Activated CD4-positive, alpha-beta T cell treated with anti-CD3 and anti-CD28 coated beads, Interleukin-2, amount 10 ng/mL, durations not matched to agents 24 days and 14 days (primary cell): ENCODE measurements at regions of chr12 and their contacts with region 1.

Region 1: DNA sequence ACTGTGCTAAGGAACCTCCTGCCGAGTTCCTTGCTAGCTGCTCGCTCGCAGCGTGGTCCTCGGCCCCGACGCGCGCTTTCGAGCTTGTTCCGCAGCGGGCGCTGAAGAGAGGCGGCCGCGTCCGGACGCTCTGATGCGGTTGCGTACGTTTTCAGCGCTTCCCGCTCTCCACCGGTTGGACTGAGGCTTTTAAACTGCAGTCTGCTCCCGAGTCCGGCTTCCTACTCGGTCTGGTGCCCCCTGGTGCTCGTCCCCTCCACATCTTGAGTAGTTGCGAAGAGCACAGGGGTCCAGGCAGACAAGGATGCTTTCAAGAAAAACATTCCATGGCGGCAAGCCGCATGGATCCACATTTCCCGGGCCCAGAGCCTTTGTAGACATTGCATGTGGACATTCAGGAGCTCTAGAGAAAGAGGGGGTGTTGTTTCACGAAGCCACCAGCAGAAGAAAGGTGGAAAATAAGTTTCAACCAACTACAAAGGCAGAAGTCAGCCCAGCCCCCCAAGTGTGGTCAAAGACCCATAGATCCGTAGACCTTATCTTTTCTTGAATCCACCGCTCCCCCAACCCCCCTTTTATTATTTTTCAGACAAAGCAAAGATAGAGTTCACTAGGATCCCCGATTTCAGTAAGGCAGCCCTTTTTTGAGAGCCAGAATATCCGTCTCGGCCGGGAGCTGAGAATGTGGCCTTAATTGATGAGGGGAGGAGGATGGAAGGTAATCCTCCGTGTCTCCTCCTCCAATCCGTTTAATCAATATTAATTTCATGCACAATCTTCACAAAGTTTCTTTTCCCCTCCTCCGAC is 984 bp upstream of the WNK1 start:
- DNase-seq: peak; percentile 96
- H3K4me3 Mint-ChIP-seq: no peak overlapping the region
- H3K27ac Mint-ChIP-seq: no peak overlapping the region
- H3K4me1 Mint-ChIP-seq: peaks cover 21% of the 10 kb centered on the region
- H3K27me3 Mint-ChIP-seq: no peaks in the 10 kb centered on the region

Region 2: GRCh38 chr12:169528-170370 is 581.6 kb before region 1 on chr12:
- intact Hi-C with region 1: no loop called
- DNase-seq: no peak
- H3K4me3 Mint-ChIP-seq: no peak overlapping the region
- H3K27ac Mint-ChIP-seq: no peak overlapping the region
- H3K4me1 Mint-ChIP-seq: peaks cover 15% of the 10 kb centered on the region
- H3K27me3 Mint-ChIP-seq: peaks cover 5% of the 10 kb centered on the region

Region 3: DNA sequence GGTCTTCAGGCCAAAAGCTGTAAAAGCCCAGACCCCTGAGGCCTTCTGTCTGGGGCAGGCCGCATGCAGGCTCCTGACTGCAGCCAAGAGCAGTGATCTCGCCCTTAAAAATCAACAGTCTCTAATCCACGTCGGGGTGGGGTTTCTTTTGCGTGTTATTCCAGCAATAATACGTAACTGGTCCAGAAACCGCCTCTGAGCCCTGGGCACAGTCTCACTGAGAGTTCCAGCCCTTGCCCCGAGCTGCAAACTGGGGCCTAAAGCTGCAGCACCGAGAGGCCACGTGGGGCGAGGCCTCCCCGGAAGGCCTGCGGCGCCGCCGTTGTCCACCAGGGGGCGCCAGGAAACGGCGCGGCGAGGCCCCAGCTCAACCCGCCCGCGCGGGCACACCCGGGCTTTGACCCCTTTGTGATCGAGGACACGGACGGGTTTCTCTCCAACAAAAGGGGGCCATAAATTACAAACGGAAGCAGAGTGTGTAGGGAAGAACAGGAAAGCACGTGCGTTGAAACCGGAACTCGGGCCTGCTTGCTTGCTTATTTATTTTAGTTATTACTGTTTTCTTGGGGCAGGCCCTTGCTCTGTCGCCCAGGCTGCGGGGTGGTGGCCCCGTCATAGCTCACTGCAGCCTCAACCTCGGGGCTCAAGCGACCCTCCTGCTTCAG is 175.3 kb before region 1 on chr12:
- intact Hi-C with region 1: loop called (anchors 1 kb)
- DNase-seq: peak; percentile 97
- H3K4me3 Mint-ChIP-seq: peak overlapping the region; percentile 55
- H3K27ac Mint-ChIP-seq: peak overlapping the region; percentile 86
- H3K4me1 Mint-ChIP-seq: peaks cover 32% of the 10 kb centered on the region
- H3K27me3 Mint-ChIP-seq: no peaks in the 10 kb centered on the region

Region 4: DNA sequence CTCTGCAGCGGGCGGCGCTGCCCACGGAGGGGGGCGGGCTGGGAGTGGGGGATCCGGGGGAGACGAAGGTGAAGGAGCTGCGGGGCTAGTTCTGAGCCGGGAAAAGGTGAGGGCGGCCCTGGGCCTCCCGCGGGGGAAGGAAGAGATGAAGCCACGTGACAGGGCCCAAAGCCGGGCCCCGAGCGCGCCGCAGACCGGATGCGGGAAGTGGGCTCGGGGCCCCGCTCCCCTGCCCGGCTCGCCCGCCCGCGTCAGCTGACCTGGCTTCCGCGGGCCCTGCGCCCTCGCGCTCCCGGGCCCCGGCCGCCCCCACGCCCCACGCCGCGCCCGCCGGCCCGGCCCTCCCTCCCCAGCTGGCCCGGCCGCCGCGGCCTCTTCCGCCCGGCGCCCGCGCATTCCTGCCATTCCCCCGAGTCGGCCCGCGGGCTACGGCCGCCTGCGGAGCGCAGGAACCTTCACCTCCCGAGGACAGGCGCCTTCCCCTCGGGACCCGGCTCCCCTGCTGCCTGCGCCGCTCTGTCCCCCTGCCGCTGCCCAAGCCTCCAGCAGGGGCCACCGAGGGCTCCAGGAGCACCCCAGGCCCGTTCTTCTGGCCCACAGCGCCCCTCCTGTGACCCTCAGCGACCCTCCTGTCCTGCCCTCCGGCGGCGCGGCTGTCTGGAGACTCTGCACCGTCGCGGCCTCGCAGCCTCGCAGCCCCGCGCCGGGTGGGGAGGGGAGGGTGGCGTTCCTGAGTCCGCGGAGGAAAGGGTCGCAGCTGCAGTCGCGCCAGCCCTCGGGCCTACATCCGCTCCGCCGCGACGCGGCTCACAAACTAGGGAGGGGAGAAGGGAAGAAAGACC is 108.5 kb before region 1 on chr12:
- intact Hi-C with region 1: loop called (anchors 1 kb)
- DNase-seq: peak; percentile 94
- H3K4me3 Mint-ChIP-seq: peak overlapping the region; percentile 86
- H3K27ac Mint-ChIP-seq: peak overlapping the region; percentile 92
- H3K4me1 Mint-ChIP-seq: peaks cover 57% of the 10 kb centered on the region
- H3K27me3 Mint-ChIP-seq: no peaks in the 10 kb centered on the region

Region 5: GRCh38 chr12:765840-766239 is 14.4 kb after region 1 on chr12:
- intact Hi-C with region 1: loop called (anchors 1 kb)
- DNase-seq: no peak
- H3K4me3 Mint-ChIP-seq: peak overlapping the region; percentile 40
- H3K27ac Mint-ChIP-seq: peak overlapping the region; percentile 40
- H3K4me1 Mint-ChIP-seq: peaks cover 32% of the 10 kb centered on the region
- H3K27me3 Mint-ChIP-seq: no peaks in the 10 kb centered on the region

Region 6: GRCh38 chr12:779745-780734 is 28.6 kb after region 1 on chr12:
- intact Hi-C with region 1: no loop called
- DNase-seq: no peak
- H3K4me3 Mint-ChIP-seq: peak overlapping the region; percentile 66
- H3K27ac Mint-ChIP-seq: no peak overlapping the region
- H3K4me1 Mint-ChIP-seq: peaks cover 48% of the 10 kb centered on the region
- H3K27me3 Mint-ChIP-seq: no peaks in the 10 kb centered on the region

Region 7: GRCh38 chr12:810671-811415 is 59.4 kb after region 1 on chr12:
- intact Hi-C with region 1: loop called (anchors 1 kb)
- DNase-seq: peak; percentile 74
- H3K4me3 Mint-ChIP-seq: no peak overlapping the region
- H3K27ac Mint-ChIP-seq: peak overlapping the region; percentile 57
- H3K4me1 Mint-ChIP-seq: peaks cover 41% of the 10 kb centered on the region
- H3K27me3 Mint-ChIP-seq: no peaks in the 10 kb centered on the region